Ovary (tissue), 10 donors: ENCODE measurements at regions of chr4 and their contacts with region 1.

Region 1: DNA sequence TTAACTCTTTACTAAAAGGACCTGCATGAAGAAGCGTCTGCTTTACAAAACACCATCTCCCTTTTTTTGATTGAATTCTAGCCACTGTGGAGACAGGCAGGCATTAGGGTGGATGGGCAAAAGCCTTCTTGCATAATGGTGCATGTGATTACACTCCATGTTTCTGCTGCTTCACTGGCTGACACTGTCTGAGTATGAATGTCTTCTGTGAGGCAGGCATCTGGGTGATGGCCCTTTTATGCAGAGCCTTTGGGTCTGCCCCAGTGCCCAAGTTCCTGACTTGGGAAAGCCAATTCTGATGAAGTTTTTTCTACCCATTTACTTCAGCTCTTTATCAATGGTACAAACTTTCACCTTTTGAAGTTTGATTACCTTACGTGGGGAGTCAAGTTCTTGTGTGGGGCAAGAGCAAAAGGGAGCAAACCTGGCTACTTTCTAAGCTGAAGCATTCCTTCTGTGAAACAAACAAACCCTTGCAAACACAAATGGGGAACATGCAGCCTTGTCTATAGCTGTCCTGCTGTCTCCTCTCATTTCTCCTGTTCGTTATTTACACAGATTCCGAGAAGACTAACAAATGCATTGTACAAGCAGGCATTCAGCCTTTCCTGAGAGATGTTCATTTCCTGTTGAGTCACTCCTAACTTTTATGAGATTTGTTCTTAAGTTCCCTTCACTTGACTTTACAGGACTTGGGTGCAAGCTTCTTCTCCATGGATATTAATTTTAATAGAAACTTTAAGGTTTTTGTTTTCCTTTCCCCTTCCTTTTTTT is 301.9 kb downstream of the TLL1 start:
- DNase-seq: no peak
- H3K4me3 ChIP-seq: no peak overlapping the region
- H3K27ac ChIP-seq: no peak overlapping the region
- H3K4me1 ChIP-seq: no peaks in the 10 kb centered on the region
- H3K27me3 ChIP-seq: no peaks in the 10 kb centered on the region
- CTCF ChIP-seq: no peak
- EP300 ChIP-seq: no peak
- POLR2A ChIP-seq: no peak

Region 2: GRCh38 chr4:166012129-166013078 is 162.5 kb before region 1 on chr4:
- intact Hi-C with region 1: no loop called
- DNase-seq: no peak
- H3K4me3 ChIP-seq: no peak overlapping the region
- H3K27ac ChIP-seq: no peak overlapping the region
- H3K4me1 ChIP-seq: no peaks in the 10 kb centered on the region
- H3K27me3 ChIP-seq: no peaks in the 10 kb centered on the region
- CTCF ChIP-seq: no peak
- EP300 ChIP-seq: no peak
- POLR2A ChIP-seq: no peak

Region 3: GRCh38 chr4:166913926-166914325 is 739.0 kb after region 1 on chr4:
- intact Hi-C with region 1: no loop called
- DNase-seq: no peak
- H3K4me3 ChIP-seq: no peak overlapping the region
- H3K27ac ChIP-seq: no peak overlapping the region
- H3K4me1 ChIP-seq: no peaks in the 10 kb centered on the region
- H3K27me3 ChIP-seq: no peaks in the 10 kb centered on the region
- CTCF ChIP-seq: no peak
- EP300 ChIP-seq: no peak
- POLR2A ChIP-seq: no peak

Region 4: GRCh38 chr4:167150587-167150986 is 975.7 kb after region 1 on chr4:
- intact Hi-C with region 1: no loop called
- DNase-seq: no peak
- H3K4me3 ChIP-seq: no peak overlapping the region
- H3K27ac ChIP-seq: no peak overlapping the region
- H3K4me1 ChIP-seq: no peaks in the 10 kb centered on the region
- H3K27me3 ChIP-seq: no peaks in the 10 kb centered on the region
- CTCF ChIP-seq: no peak
- EP300 ChIP-seq: no peak
- POLR2A ChIP-seq: no peak

Region 5: GRCh38 chr4:167419468-167420140 is 1244.7 kb after region 1 on chr4:
- intact Hi-C with region 1: loop called in 1 of 4 experiments (anchors 5 kb)
- DNase-seq: no peak
- H3K4me3 ChIP-seq: no peak overlapping the region
- H3K27ac ChIP-seq: no peak overlapping the region
- H3K4me1 ChIP-seq: no peaks in the 10 kb centered on the region
- H3K27me3 ChIP-seq: no peaks in the 10 kb centered on the region
- CTCF ChIP-seq: no peak
- EP300 ChIP-seq: no peak
- POLR2A ChIP-seq: no peak